ENCODE measurements at regions of chr7 and their contacts with region 1.

Region 1: DNA sequence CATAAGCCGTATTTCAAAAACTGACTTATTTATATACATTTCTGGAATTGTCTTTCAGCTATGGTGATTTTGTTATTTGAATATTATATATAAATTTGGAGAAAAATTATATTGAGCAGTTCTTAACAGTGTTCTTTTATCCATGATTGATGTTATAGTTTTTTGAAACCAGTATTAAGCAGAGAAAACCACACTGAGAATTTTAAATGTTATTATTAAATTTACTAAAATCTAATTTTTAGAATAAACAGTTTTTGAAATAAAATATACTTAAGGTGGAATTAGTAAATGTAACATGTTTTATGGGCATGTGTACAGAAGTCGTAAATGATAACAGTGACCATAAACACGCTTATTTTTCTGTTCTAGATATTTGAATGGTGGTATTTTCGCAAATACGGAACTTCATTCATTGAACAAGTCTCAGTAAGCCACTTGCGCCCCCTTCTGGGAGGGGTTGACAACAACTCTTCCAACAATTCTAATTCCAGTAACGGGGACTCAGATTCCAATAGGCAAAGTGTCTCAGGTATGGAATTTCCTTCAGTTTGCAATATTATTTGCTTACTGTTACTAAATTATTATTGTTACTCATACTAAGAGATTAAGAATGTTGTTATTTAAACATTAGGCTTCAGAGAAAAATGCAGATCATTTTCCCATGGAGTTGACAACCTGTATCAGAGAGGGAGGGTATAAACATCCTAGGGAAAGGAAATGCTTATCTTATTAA is 166.1 kb downstream of the ST7 start:
- DNase-seq: peak; percentile 62 to 86 (median 76)
- H3K4me3 ChIP-seq: no peak overlapping the region
- H3K4me3 Mint-ChIP-seq: no peak overlapping the region
- H3K27ac ChIP-seq: no peak overlapping the region
- H3K27ac Mint-ChIP-seq: no peak overlapping the region
- H3K4me1 ChIP-seq: peaks cover under 1 to 3% of the 10 kb centered on the region in 2 donors
- H3K4me1 Mint-ChIP-seq: peaks cover under 1% of the 10 kb centered on the region
- H3K27me3 ChIP-seq: no peaks in the 10 kb centered on the region
- H3K27me3 Mint-ChIP-seq: peaks cover 0 to 2% (median 0%) of the 10 kb centered on the region in 3 donors
- CTCF ChIP-seq: peak; percentile 96

Region 2: GRCh38 chr7:116929914-116930913 is 189.1 kb before region 1 on chr7:
- intact Hi-C with region 1: loop called (anchors 2 to 5 kb)
- DNase-seq: peak; percentile 61 to 80 (median 68)
- H3K4me3 ChIP-seq: no peak overlapping the region
- H3K4me3 Mint-ChIP-seq: no peak overlapping the region
- H3K27ac ChIP-seq: no peak overlapping the region
- H3K27ac Mint-ChIP-seq: peak overlapping the region in 1 of 7 donors; percentile 7
- H3K4me1 ChIP-seq: no peaks in the 10 kb centered on the region
- H3K4me1 Mint-ChIP-seq: peaks cover 8% of the 10 kb centered on the region
- H3K27me3 ChIP-seq: no peaks in the 10 kb centered on the region
- H3K27me3 Mint-ChIP-seq: peaks cover 0 to 8% (median 2%) of the 10 kb centered on the region in 3 donors
- CTCF ChIP-seq: peak; percentile 96

Region 3: GRCh38 chr7:116984917-116985316 is 134.4 kb before region 1 on chr7:
- intact Hi-C with region 1: loop called (anchors 10 kb)
- DNase-seq: peak in 2 of 3 donors; percentile 21 to 31
- H3K4me3 ChIP-seq: no peak overlapping the region
- H3K4me3 Mint-ChIP-seq: no peak overlapping the region
- H3K27ac ChIP-seq: no peak overlapping the region
- H3K27ac Mint-ChIP-seq: no peak overlapping the region
- H3K4me1 ChIP-seq: peaks cover 6 to 15% of the 10 kb centered on the region in 2 donors
- H3K4me1 Mint-ChIP-seq: peaks cover 28% of the 10 kb centered on the region
- H3K27me3 ChIP-seq: no peaks in the 10 kb centered on the region
- H3K27me3 Mint-ChIP-seq: peaks cover 0 to 1% (median 0%) of the 10 kb centered on the region in 3 donors
- CTCF ChIP-seq: peak; percentile 83

Region 4: GRCh38 chr7:116999311-116999710 is 120.0 kb before region 1 on chr7:
- intact Hi-C with region 1: loop called in 1 of 2 experiments (anchors 10 kb)
- DNase-seq: no peak
- H3K4me3 ChIP-seq: no peak overlapping the region
- H3K4me3 Mint-ChIP-seq: no peak overlapping the region
- H3K27ac ChIP-seq: no peak overlapping the region
- H3K27ac Mint-ChIP-seq: no peak overlapping the region
- H3K4me1 ChIP-seq: peaks cover 0 to 2% of the 10 kb centered on the region in 2 donors
- H3K4me1 Mint-ChIP-seq: peaks cover 5% of the 10 kb centered on the region
- H3K27me3 ChIP-seq: no peaks in the 10 kb centered on the region
- H3K27me3 Mint-ChIP-seq: no peaks in the 10 kb centered on the region
- CTCF ChIP-seq: no peak

Region 5: DNA sequence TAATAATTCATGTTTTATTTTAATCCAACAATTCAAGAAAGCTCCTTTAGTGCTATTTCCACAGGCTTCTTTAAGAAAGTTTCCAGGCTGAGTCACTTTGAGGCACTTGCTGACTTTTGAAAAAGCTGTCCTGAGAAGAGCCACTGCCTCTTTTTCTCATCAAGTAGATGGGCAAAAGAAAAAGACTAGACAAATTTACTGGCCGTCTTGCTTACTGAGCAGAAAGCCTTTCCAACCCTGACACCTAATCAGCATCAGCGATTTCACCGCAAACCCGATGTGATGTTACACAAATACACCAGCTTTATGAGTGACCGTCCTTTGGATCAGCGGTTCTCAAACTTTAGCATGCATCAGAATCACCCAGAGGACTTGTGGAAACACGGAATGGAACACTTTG is 729.6 kb after region 1 on chr7:
- intact Hi-C with region 1: no loop called
- DNase-seq: no peak
- H3K4me3 ChIP-seq: no peak overlapping the region
- H3K4me3 Mint-ChIP-seq: no peak overlapping the region
- H3K27ac ChIP-seq: no peak overlapping the region
- H3K27ac Mint-ChIP-seq: no peak overlapping the region
- H3K4me1 ChIP-seq: no peaks in the 10 kb centered on the region
- H3K4me1 Mint-ChIP-seq: no peaks in the 10 kb centered on the region
- H3K27me3 ChIP-seq: no peaks in the 10 kb centered on the region
- H3K27me3 Mint-ChIP-seq: peaks cover 3 to 10% (median 10%) of the 10 kb centered on the region in 3 donors
- CTCF ChIP-seq: no peak